Activated T-helper 1 cell treated with anti-CD3 and anti-CD28 coated beads, Interleukin-12 subunit alpha, Interleukin-12 subunit beta, Interleukin-2, Interleukin-4 antibody, amounts not matched to agents 30 ng/mL and 10 ng/mL and 1 ng/mL, durations not matched to agents 14 hours and 24 hours and 36 hours (primary cell): ENCODE measurements at regions of chr3 and their contacts with region 1.

Region 1: DNA sequence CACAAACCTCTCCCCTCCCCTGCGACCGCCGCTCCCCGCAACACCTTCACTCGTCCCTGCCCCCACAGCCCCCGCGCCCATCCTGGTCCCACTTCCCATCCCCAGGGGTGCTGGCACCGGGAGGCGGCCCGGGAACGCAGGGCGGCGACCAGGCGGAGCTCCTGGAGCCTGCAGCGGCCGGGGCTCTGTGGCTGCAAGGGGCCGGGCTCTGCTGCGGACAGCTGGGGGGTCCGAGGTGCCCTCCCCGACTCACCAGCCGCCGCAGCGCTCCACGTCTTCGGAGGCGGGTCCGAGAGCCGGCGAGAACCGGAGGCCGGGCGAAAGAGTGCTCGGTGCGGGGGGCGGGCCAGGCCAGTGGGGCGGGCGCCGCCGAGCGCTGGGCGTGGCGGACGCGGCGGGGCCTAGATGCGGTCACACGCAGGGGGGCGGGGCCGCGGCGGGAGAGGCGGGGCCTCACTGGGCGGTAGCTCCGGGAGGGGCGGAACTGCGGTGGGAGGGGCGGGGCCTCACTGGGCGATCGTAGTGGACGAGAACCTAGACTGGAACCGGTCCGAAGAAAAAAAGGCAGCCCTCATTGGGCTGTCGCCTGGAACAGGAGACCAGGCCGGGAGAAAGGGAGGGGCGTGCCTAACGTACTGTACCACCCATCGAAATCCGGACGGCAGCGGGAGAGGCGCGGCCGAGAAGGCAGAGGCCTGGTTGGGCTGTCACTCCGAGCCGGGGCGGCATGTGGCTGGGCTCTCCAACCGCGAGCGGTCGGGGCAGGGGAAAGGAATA is at the start of gene ANO10:
- DNase-seq: peak; percentile 90
- H3K4me3 Mint-ChIP-seq: peak within 1 kb of the TSS; percentile 91
- H3K27ac Mint-ChIP-seq: peak within 1 kb of the TSS; percentile 70
- H3K4me1 Mint-ChIP-seq: peaks cover 32% of the 10 kb centered on the region
- H3K27me3 Mint-ChIP-seq: peaks cover 26% of the 10 kb centered on the region
- total RNA-seq, gene ANO10: 4.2 and 4.6 TPM in 2 replicates

Region 2: DNA sequence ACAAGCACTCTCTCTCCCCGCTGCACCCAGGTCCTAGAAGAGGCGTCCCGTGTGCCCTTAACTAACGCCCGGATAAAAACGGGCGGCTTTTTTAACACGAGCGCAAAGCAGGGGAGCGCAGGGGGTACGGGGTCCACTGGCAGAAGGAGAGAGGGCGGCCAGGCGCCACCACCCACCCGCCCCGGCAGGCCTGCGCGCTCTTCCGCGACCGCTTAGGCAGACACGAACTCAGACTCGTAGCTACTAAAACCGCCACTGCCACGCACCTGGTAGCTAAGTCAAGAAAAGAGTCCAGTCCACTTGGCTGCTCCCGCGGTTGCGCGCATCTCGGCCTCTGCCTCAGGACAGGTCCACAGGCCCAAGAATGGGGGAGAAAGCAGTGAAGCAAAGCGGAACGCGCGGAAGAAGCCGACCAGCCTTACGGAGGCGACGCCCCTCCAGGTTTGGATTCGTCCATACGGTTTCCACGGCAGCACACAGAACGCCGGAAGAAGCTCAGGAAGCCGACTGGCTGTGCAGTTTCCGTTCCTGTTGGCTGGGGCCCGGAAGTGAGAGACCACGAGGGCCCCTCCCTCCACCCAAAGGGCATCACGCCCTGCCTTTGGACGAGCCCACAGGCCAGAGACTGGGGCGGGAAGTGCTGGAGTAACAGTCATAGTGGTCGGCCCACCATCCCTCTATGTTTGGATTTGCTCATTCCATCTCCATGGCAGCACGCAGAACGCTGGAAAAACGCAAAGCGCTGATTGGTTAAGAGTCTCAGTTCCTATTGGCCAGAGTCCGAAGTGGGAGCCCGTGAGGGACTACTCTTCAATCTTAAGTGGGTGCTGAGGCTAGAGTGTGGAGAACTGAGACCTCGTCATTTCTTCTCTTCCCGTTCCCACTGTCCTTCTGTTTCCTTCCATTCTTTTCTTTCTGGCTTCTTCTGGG is 1659.8 kb before region 1 on chr3 and contains the start of gene ULK4:
- intact Hi-C with region 1: loop called (anchors 10 kb)
- DNase-seq: peak; percentile 95
- H3K4me3 Mint-ChIP-seq: peak within 1 kb of the TSS; percentile 95
- H3K27ac Mint-ChIP-seq: peak within 1 kb of the TSS; percentile 93
- H3K4me1 Mint-ChIP-seq: peaks cover 16% of the 10 kb centered on the region
- H3K27me3 Mint-ChIP-seq: peaks cover 2% of the 10 kb centered on the region
- total RNA-seq, gene ULK4: 7.3 and 8.1 TPM in 2 replicates

Region 3: GRCh38 chr3:42772670-42773408 is 849.0 kb before region 1 on chr3 and contains the start of gene CCDC13:
- intact Hi-C with region 1: loop called (anchors 2 kb)
- DNase-seq: peak; percentile 86
- H3K4me3 Mint-ChIP-seq: peak within 1 kb of the TSS; percentile 85
- H3K27ac Mint-ChIP-seq: peak within 1 kb of the TSS; percentile 85
- H3K4me1 Mint-ChIP-seq: peaks cover 12% of the 10 kb centered on the region
- H3K27me3 Mint-ChIP-seq: peaks cover 9% of the 10 kb centered on the region
- total RNA-seq, gene CCDC13: 0.32 TPM in 1 of 2 replicates, not detected in the other

Region 4: DNA sequence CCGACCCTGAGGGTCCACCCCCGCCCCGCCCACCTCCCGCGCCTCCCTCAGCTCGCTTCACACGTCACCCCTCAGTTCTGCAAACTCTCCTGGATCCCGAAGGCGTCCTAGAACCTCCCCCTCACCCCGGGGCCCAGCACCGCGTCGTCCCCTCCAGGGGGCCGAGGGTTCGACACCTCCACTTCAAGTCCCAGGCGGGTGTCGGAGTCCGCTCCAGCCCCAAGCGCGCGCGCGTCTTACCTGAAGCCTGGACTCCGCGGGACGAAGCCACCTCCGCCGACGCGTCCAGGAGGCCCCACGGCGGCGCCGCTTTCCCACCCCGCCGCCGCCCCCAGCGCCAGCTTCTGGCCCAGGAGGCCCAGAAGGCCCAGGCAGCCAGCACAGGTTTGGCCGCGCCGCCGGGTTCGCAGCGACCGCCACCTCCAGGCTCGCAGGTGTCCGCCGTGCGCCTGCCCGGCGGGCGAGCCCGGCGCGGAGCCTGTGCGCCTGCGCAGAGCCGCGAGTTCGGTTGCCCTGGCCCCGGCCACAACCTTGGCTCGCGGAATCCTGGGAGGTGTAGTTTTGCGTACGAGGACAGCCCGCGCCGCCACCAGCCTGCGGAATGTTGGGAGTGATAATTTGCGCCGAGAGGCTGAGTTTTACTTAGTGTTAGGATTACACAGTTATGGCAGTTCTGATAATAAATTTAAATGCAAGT is 516.1 kb before region 1 on chr3 and contains the start of gene POMGNT2:
- intact Hi-C with region 1: loop called (anchors 1 kb)
- DNase-seq: peak; percentile 82
- H3K4me3 Mint-ChIP-seq: peak within 1 kb of the TSS; percentile 72
- H3K27ac Mint-ChIP-seq: no peak within 1 kb of the TSS
- H3K4me1 Mint-ChIP-seq: peaks cover 12% of the 10 kb centered on the region
- H3K27me3 Mint-ChIP-seq: peaks cover 4% of the 10 kb centered on the region
- total RNA-seq, gene POMGNT2: 8.3 and 9.8 TPM in 2 replicates

Region 5: DNA sequence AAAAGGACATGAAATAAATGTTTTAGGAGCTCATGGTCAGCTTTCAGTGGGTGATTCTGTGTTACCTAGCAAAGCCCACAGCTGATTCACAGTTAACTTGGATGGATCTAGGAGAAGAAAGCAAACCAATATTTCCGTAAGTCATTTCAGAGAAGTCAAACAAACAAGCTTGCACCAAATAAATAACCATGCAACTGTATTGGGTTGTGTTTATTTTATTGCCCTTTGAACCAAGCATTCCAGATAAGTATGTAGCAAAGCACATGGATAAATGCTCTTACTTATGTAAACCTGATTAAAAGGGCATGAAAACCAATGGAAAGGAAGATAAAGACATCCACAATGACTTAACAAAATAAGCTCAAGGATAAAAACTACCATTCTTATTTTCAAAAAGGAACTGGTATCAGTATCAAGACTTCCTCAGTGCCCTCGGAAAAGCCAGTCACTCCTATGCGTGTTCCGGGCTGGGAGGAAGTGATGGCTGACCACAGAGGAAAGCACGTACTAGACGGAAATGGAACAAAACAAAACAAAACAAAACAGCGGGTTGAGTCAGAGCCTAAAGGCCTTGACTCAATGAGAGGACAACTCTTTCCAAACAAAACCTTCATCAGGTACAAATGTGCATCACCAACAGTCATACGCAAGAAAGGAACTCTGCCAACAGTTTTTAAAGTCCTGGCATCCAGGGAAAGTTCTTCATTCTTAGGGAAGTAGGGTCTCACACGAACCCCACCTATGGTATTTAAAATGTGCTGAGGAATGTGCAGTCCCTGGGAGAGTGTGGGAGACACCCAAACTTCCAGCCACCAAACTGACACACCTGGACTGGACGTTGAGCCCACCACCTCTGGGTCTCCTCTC is 232.2 kb before region 1 on chr3:
- intact Hi-C with region 1: loop called (anchors 2 kb)
- DNase-seq: peak; percentile 72
- H3K4me3 Mint-ChIP-seq: peak overlapping the region; percentile 35
- H3K27ac Mint-ChIP-seq: peak overlapping the region; percentile 81
- H3K4me1 Mint-ChIP-seq: peaks cover 52% of the 10 kb centered on the region
- H3K27me3 Mint-ChIP-seq: peaks cover 6% of the 10 kb centered on the region

Region 6: GRCh38 chr3:44338010-44338827 is 716.4 kb after region 1 on chr3 and contains the start of gene TCAIM:
- intact Hi-C with region 1: loop called (anchors 2 kb)
- DNase-seq: peak; percentile 98
- H3K4me3 Mint-ChIP-seq: peak within 1 kb of the TSS; percentile 98
- H3K27ac Mint-ChIP-seq: peak within 1 kb of the TSS; percentile 97
- H3K4me1 Mint-ChIP-seq: peaks cover 17% of the 10 kb centered on the region
- H3K27me3 Mint-ChIP-seq: peaks cover 4% of the 10 kb centered on the region
- total RNA-seq, gene TCAIM: 13.6 and 14.4 TPM in 2 replicates